ENCODE measurements at regions of chr2 and their contacts with region 1.

Region 1: GRCh38 chr2:195659982-195660890 is 3.2 kb downstream of the SLC39A10 start:
- DNase-seq: peak; percentile 72 to 77
- H3K4me3 ChIP-seq: peak overlapping the region in 1 of 3 donors; percentile 93
- H3K27ac ChIP-seq: peak overlapping the region in 1 of 3 donors; percentile 99
- H3K4me1 ChIP-seq: peaks cover 5 to 10% of the 10 kb centered on the region in 2 donors
- H3K27me3 ChIP-seq: no peaks in the 10 kb centered on the region
- CTCF ChIP-seq: peak; percentile 73 to 82 (median 80)
- POLR2A ChIP-seq: no peak

Region 2: GRCh38 chr2:195498176-195498575 is 162.1 kb before region 1 on chr2:
- intact Hi-C with region 1: loop called (anchors 10 kb)
- DNase-seq: peak; percentile 70 to 71
- H3K4me3 ChIP-seq: no peak overlapping the region
- H3K27ac ChIP-seq: no peak overlapping the region
- H3K4me1 ChIP-seq: no peaks in the 10 kb centered on the region
- H3K27me3 ChIP-seq: no peaks in the 10 kb centered on the region
- CTCF ChIP-seq: peak in 5 of 6 experiments; percentile 14 to 53 (median 50)
- POLR2A ChIP-seq: no peak

Region 3: DNA sequence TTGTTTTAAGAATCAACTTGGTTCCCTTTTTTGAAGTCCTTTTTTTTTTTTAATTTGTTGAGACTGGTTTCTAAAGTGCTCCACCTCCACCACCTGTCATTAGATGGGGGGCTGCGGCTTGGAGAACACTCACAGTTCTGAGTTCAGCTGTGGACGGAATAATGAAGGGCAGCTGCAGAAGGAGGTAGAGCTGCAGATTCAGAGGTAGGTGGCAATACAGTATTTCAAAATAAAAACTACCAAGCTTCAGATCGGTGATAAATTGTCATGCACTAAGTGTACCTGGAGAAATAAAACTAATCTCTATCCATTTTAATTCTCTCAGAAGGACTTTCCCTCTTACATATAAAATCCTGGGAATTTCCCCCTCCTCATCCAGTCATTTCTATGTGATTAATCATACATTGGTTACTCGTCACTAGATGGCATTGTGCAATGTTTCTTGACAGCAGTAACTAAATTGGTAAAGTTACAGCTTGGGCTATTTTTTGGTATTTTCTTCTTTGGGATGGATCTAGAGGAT is 84.3 kb before region 1 on chr2:
- intact Hi-C with region 1: loop called (anchors 10 kb)
- DNase-seq: no peak
- H3K4me3 ChIP-seq: no peak overlapping the region
- H3K27ac ChIP-seq: no peak overlapping the region
- H3K4me1 ChIP-seq: peaks cover 0 to 10% of the 10 kb centered on the region in 2 donors
- H3K27me3 ChIP-seq: no peaks in the 10 kb centered on the region
- CTCF ChIP-seq: peak in 4 of 6 experiments; percentile 21 to 65 (median 51)
- POLR2A ChIP-seq: no peak